ENCODE measurements at regions of chr20 and their contacts with region 1.

Region 1: DNA sequence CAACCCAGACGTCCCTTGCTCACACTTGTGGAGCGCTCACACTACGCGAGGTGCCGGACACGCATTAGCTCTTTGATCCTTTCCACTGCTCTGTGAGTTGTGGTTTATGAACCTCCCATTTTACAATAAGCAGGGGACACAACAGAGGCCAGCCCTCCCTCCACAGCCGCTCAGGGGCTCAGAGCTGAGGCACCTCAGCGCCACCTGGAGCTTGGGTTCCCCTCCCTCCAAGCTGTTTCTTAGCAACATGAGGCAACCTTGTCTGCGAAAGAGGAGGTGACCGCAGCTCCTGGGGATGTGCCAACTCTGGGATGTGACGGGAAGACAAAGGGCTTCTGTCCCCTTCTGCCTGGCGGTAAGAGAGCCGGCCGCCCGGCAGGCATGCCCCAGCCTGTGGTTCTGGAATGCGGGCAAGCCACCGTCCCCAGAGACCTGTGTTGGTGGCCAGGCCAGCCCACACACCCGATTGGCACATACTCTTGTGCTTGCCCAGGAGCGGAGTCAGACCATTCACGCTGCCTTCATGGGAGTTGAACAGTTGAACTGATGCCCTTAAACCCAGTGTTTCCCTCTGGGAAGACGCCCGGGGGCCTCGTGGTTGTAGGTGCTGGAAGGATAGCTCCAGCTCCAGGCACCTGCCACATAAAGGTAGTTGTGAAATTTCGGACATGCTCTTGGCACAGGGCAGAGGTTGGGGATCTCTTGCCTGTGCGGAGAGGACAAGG is 44.5 kb downstream of the RBM38 start:
- DNase-seq: peak; percentile 97
- ATAC-seq: peak; percentile 78
- H3K4me3 ChIP-seq: peak overlapping the region; percentile 20; the same call in 1 of the 2 replicates
- H3K27ac ChIP-seq: peak overlapping the region; percentile 10
- H3K4me1 ChIP-seq: peaks cover 29% of the 10 kb centered on the region
- H3K27me3 ChIP-seq: no peaks in the 10 kb centered on the region
- CTCF ChIP-seq: peak; percentile 55

Region 2: DNA sequence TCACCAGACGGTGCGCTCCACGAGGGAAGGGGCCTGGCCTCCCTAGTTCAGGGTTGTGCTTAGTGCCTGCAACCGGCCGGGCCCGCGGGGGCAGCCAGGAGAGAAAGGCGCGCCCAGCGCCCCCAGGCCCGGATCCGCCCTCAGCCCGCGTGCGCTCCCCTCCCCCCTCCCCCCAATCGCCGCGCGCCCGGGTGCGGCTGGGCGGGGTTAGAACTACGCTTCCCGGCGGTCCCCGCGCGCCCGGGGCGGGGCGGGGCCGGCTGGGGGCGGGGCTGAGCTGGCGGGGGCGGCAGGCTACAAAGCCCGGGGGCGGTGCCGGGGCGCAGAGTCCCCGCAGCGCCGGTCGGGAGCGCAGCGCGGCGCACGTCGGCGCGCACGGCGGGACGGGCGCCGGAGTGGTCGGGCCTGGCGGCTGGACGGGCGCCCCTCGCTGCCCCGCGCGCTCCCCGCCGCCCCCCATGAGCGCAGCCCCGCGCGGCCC is 44.5 kb before region 1 on chr20 and contains the start of gene RBM38:
- CTCF ChIA-PET with region 1: interaction called, 3 read pairs
- POLR2A ChIA-PET with region 1: no interaction called
- intact Hi-C with region 1: loop called (anchors 5 kb)
- DNase-seq: peak; percentile 90
- ATAC-seq: peak; percentile 84
- H3K4me3 ChIP-seq: peak within 1 kb of the TSS; percentile 82
- H3K27ac ChIP-seq: peak within 1 kb of the TSS; percentile 6; the same call in 1 of the 2 replicates
- H3K4me1 ChIP-seq: peaks cover 33% of the 10 kb centered on the region
- H3K27me3 ChIP-seq: no peaks in the 10 kb centered on the region
- CTCF ChIP-seq: no peak
- total RNA-seq, gene RBM38: 56.5 and 59.3 TPM in 2 replicates

Region 3: GRCh38 chr20:57596998-57597939 is 161.6 kb after region 1 on chr20:
- CTCF ChIA-PET with region 1: no interaction called
- POLR2A ChIA-PET with region 1: no interaction called
- intact Hi-C with region 1: no loop called
- DNase-seq: peak; percentile 72
- ATAC-seq: peak; percentile 79
- H3K4me3 ChIP-seq: peak overlapping the region; percentile 62
- H3K27ac ChIP-seq: no peak overlapping the region
- H3K4me1 ChIP-seq: peaks cover 18% of the 10 kb centered on the region
- H3K27me3 ChIP-seq: no peaks in the 10 kb centered on the region
- CTCF ChIP-seq: peak; percentile 98